Dorsolateral prefrontal cortex (tissue), 120 donors: ENCODE measurements at regions of chr17 and their contacts with region 1.

Region 1: GRCh38 chr17:16438557-16439302 is 23.4 kb downstream of the TRPV2 start:
- DNase-seq: peak; percentile 86 to 99 (median 95)
- H3K4me3 ChIP-seq: peak overlapping the region; percentile 71 to 100 (median 92)
- H3K27ac ChIP-seq: peak overlapping the region; percentile 77 to 98 (median 95)
- H3K27me3 ChIP-seq: no peaks in the 10 kb centered on the region
- CTCF ChIP-seq: peak in 19 of 56 donors; percentile 3 to 55 (median 19)

Region 2: GRCh38 chr17:16380640-16381495 is 57.9 kb before region 1 on chr17 and contains the start of gene UBB:
- intact Hi-C with region 1: loop called (anchors 1 to 2 kb)
- DNase-seq: peak; percentile 90 to 97 (median 96)
- H3K4me3 ChIP-seq: peak within 1 kb of the TSS; percentile 64 to 93 (median 80)
- H3K27ac ChIP-seq: peak within 1 kb of the TSS; percentile 84 to 100 (median 99)
- H3K27me3 ChIP-seq: no peaks in the 10 kb centered on the region
- CTCF ChIP-seq: peak in 9 of 56 donors; percentile 4 to 45 (median 9)
- total RNA-seq, gene UBB: 963 to 2,431 (median 1,830) TPM

Region 3: GRCh38 chr17:16653209-16654041 is 214.7 kb after region 1 on chr17 and contains the start of gene ZNF624:
- intact Hi-C with region 1: loop called in 1 of 2 experiments (anchors 5 kb)
- DNase-seq: peak; percentile 83 to 92 (median 88)
- H3K4me3 ChIP-seq: peak within 1 kb of the TSS; percentile 49 to 98 (median 85)
- H3K27ac ChIP-seq: peak within 1 kb of the TSS; percentile 72 to 99 (median 95)
- H3K27me3 ChIP-seq: no peaks in the 10 kb centered on the region
- CTCF ChIP-seq: peak in 29 of 56 donors; percentile 6 to 57 (median 34)
- total RNA-seq, gene ZNF624: 3.7 to 16.0 (median 9.3) TPM